Body of pancreas (tissue), 4 donors: ENCODE measurements at regions of chr9 and their contacts with region 1.

Region 1: DNA sequence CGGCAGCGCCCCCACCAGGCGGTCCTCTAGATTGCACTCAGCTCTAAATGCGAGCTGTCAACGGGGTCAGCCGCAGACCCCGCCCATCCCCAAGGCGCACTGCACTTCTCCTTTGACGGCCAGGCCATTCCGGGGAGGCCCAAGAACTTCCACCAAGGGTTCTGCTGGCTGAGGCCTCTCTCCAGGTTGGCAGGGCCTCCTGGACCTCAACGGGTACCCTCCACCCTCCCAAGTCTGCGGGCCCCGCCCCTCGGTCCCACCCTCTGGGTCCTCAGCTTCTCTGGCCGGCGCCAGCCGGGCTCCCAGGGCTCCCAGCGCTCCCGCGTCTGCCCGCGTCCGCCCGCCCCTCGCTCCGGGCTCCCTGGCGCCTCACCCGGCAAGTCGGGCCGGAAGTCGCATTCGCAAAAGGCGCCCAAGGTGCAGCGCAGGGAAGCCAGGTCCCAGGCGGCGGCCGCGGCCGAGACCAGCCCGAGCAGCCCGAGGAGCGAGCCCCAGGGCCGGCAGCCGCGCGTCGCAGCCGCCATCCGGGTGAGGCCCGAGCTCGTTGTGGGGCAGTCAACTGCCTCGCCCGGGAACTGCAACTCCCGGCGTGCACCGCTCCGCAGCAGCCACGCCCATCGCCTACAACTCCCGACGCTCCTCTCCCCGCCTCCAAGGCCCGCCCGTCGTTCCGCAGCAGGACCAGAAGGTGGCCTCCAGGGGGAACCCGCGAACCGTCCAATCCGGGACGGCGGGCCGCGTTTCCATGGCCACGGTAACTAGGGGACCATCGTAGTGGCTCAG is at the start of gene TOR2A:
- DNase-seq: peak; percentile 97 to 98 (median 98)
- ATAC-seq: peak; percentile 95
- H3K4me3 ChIP-seq: peak within 1 kb of the TSS; percentile 63 to 70
- H3K27ac ChIP-seq: peak within 1 kb of the TSS; percentile 81 to 99 (median 93)
- H3K4me1 ChIP-seq: peaks cover 7% of the 10 kb centered on the region
- H3K27me3 ChIP-seq: no peaks in the 10 kb centered on the region
- CTCF ChIP-seq: peak; percentile 92 to 99 (median 99)
- POLR2A ChIP-seq: peak; percentile 77 to 80 (median 77)
- total RNA-seq, gene TOR2A: 8.3 to 14.2 TPM

Region 2: GRCh38 chr9:127779136-127779981 is 44.4 kb after region 1 on chr9:
- intact Hi-C with region 1: loop called (anchors 5 kb)
- DNase-seq: no peak
- ATAC-seq: no peak
- H3K4me3 ChIP-seq: no peak overlapping the region
- H3K27ac ChIP-seq: peak overlapping the region in 2 of 4 donors; percentile 45 to 50
- H3K4me1 ChIP-seq: peaks cover 2% of the 10 kb centered on the region
- H3K27me3 ChIP-seq: no peaks in the 10 kb centered on the region
- CTCF ChIP-seq: no peak
- POLR2A ChIP-seq: no peak

Region 3: GRCh38 chr9:127869310-127870152 is 134.6 kb after region 1 on chr9:
- intact Hi-C with region 1: loop called (anchors 10 kb)
- DNase-seq: peak; percentile 88 to 90 (median 89)
- ATAC-seq: peak; percentile 84
- H3K4me3 ChIP-seq: no peak overlapping the region
- H3K27ac ChIP-seq: no peak overlapping the region
- H3K4me1 ChIP-seq: peaks cover 10% of the 10 kb centered on the region
- H3K27me3 ChIP-seq: no peaks in the 10 kb centered on the region
- CTCF ChIP-seq: peak; percentile 70 to 98 (median 92)
- POLR2A ChIP-seq: no peak

Region 4: GRCh38 chr9:127921557-127922120 is 186.7 kb after region 1 on chr9:
- intact Hi-C with region 1: loop called (anchors 5 kb)
- DNase-seq: peak; percentile 66 to 79 (median 76)
- ATAC-seq: peak; percentile 27
- H3K4me3 ChIP-seq: no peak overlapping the region
- H3K27ac ChIP-seq: no peak overlapping the region
- H3K4me1 ChIP-seq: peaks cover 41% of the 10 kb centered on the region
- H3K27me3 ChIP-seq: no peaks in the 10 kb centered on the region
- CTCF ChIP-seq: peak; percentile 93 to 96 (median 94)
- POLR2A ChIP-seq: no peak

Region 5: DNA sequence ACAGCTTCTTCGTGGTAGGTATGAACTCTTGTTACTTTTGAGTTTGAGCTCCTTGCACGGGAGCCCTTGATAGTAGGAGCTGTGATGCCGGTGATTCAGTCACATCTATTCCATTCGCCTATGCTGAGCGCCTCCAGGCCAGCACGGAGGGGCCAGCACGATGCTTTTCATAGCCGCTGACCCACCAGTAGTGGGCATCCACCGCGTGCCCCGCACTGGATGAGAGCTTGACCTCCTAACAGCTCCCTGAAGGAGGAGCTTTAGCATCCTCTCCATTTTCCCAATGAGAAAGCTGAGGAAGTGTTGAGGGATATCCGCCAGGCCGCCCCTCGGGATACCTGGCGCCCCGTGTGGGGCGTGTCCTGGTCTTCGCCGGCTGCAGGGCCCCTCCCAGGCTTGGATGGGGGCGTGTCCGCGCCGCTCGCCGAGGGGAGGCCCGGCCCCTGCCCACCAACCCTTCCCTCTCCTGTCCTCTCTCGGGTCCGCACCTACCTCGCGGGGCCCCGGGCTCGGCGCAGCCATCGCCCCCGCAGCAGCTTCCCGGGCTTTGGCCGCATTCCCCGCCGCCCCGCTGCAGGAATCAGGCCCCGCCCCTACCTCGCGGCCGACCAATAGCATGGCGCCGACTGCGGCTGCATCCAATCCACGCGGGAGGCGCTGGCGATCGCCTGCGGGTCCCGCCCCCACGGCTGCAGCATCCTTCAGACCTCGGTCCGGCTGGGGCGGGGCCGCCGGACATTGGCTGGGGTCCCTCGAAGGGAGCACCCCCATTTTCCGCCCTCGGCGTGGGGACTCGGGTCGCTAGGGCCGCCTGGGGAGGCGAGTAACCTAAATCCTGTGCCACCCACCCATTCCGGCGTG is 195.5 kb after region 1 on chr9 and contains the start of gene PIP5KL1:
- intact Hi-C with region 1: loop called (anchors 5 kb)
- DNase-seq: peak; percentile 64 to 78 (median 76)
- ATAC-seq: peak; percentile 64
- H3K4me3 ChIP-seq: no peak within 1 kb of the TSS
- H3K27ac ChIP-seq: peak within 1 kb of the TSS in 1 of 4 donors; percentile 3
- H3K4me1 ChIP-seq: peaks cover 41% of the 10 kb centered on the region
- H3K27me3 ChIP-seq: no peaks in the 10 kb centered on the region
- CTCF ChIP-seq: no peak
- POLR2A ChIP-seq: peak in 1 of 3 donors; percentile 19
- total RNA-seq, gene PIP5KL1: 1.3 to 2.6 TPM